ENCODE measurements at regions of chr15 and their contacts with region 1.

Region 1: GRCh38 chr15:48096813-48097212 is 24.0 kb upstream of the SLC24A5 start:
- DNase-seq: peak; percentile 69
- H3K4me3 ChIP-seq: no peak overlapping the region
- CTCF ChIP-seq: no peak

Region 2: GRCh38 chr15:48084759-48085590 is 11.8 kb before region 1 on chr15:
- CTCF ChIA-PET with region 1: interaction called, 10 read pairs
- POLR2A ChIA-PET with region 1: no interaction called
- DNase-seq: no peak
- H3K4me3 ChIP-seq: no peak overlapping the region
- CTCF ChIP-seq: peak; percentile 38

Region 3: GRCh38 chr15:48131324-48131723 is 34.5 kb after region 1 on chr15:
- CTCF ChIA-PET with region 1: no interaction called
- POLR2A ChIA-PET with region 1: no interaction called
- DNase-seq: no peak
- H3K4me3 ChIP-seq: no peak overlapping the region
- CTCF ChIP-seq: no peak

Measured in AG04449 (cell line).